B cell (primary cell): ENCODE measurements at regions of chr22 and their contacts with region 1.

Region 1: GRCh38 chr22:40487663-40488249 is 117.4 kb downstream of the SGSM3 start:
- DNase-seq: peak; percentile 64
- ATAC-seq: no peak
- H3K4me3 ChIP-seq: no peak overlapping the region
- H3K4me3 Mint-ChIP-seq: no peak overlapping the region
- H3K27ac ChIP-seq: peak overlapping the region in 1 of 2 donors; percentile 25
- H3K27ac Mint-ChIP-seq: peak overlapping the region; percentile 5
- H3K4me1 ChIP-seq: peaks cover 25 to 30% of the 10 kb centered on the region in 2 donors
- H3K4me1 Mint-ChIP-seq: peaks cover 26% of the 10 kb centered on the region
- H3K27me3 ChIP-seq: no peaks in the 10 kb centered on the region
- H3K27me3 Mint-ChIP-seq: no peaks in the 10 kb centered on the region
- CTCF ChIP-seq: peak; percentile 83

Region 2: GRCh38 chr22:40368016-40368415 is 119.7 kb before region 1 on chr22:
- CTCF ChIA-PET with region 1: interaction called, 3 read pairs
- POLR2A ChIA-PET with region 1: no interaction called
- intact Hi-C with region 1: loop called (anchors 2 kb)
- DNase-seq: no peak
- ATAC-seq: no peak
- H3K4me3 ChIP-seq: no peak overlapping the region
- H3K4me3 Mint-ChIP-seq: no peak overlapping the region
- H3K27ac ChIP-seq: no peak overlapping the region
- H3K27ac Mint-ChIP-seq: peak overlapping the region; percentile 26
- H3K4me1 ChIP-seq: peaks cover 6 to 9% of the 10 kb centered on the region in 2 donors
- H3K4me1 Mint-ChIP-seq: peaks cover 18% of the 10 kb centered on the region
- H3K27me3 ChIP-seq: no peaks in the 10 kb centered on the region
- H3K27me3 Mint-ChIP-seq: no peaks in the 10 kb centered on the region
- CTCF ChIP-seq: no peak

Region 3: GRCh38 chr22:40418366-40419201 is 69.2 kb before region 1 on chr22:
- CTCF ChIA-PET with region 1: interaction called, 11 read pairs
- POLR2A ChIA-PET with region 1: no interaction called
- intact Hi-C with region 1: no loop called
- DNase-seq: peak; percentile 62
- ATAC-seq: peak; percentile 20
- H3K4me3 ChIP-seq: no peak overlapping the region
- H3K4me3 Mint-ChIP-seq: no peak overlapping the region
- H3K27ac ChIP-seq: peak overlapping the region; percentile 16 to 17
- H3K27ac Mint-ChIP-seq: peak overlapping the region; percentile 64
- H3K4me1 ChIP-seq: peaks cover 54 to 64% of the 10 kb centered on the region in 2 donors
- H3K4me1 Mint-ChIP-seq: peaks cover 60% of the 10 kb centered on the region
- H3K27me3 ChIP-seq: no peaks in the 10 kb centered on the region
- H3K27me3 Mint-ChIP-seq: no peaks in the 10 kb centered on the region
- CTCF ChIP-seq: no peak

Region 4: DNA sequence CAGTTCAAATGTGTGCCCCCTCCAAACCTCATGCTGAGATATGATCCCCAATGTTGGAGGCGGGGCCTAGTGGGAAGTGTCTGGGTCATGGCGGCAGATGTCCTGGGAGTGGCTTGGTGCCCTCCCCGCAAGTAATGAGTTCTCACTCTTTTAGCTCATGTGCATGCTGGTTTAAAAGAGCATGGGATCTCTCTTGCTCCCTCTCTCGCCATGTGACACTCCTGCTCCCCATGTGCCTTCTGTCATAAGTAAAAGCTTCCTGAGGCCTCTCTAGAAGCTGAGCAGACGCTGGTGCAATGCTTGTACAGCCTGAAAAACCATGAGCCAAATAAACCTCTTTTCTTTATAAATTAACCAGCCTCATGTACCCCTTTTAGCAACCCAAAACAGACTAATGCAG is 18.6 kb before region 1 on chr22:
- CTCF ChIA-PET with region 1: interaction called, 31 read pairs
- POLR2A ChIA-PET with region 1: no interaction called
- intact Hi-C with region 1: no loop called
- DNase-seq: no peak
- ATAC-seq: no peak
- H3K4me3 ChIP-seq: no peak overlapping the region
- H3K4me3 Mint-ChIP-seq: no peak overlapping the region
- H3K27ac ChIP-seq: no peak overlapping the region
- H3K27ac Mint-ChIP-seq: no peak overlapping the region
- H3K4me1 ChIP-seq: peaks cover under 1 to 2% of the 10 kb centered on the region in 2 donors
- H3K4me1 Mint-ChIP-seq: peaks cover 6% of the 10 kb centered on the region
- H3K27me3 ChIP-seq: no peaks in the 10 kb centered on the region
- H3K27me3 Mint-ChIP-seq: no peaks in the 10 kb centered on the region
- CTCF ChIP-seq: no peak

Region 5: GRCh38 chr22:40547729-40548172 is 60.0 kb after region 1 on chr22:
- CTCF ChIA-PET with region 1: no interaction called
- POLR2A ChIA-PET with region 1: no interaction called
- intact Hi-C with region 1: no loop called
- DNase-seq: no peak
- ATAC-seq: no peak
- H3K4me3 ChIP-seq: no peak overlapping the region
- H3K4me3 Mint-ChIP-seq: no peak overlapping the region
- H3K27ac ChIP-seq: no peak overlapping the region
- H3K27ac Mint-ChIP-seq: no peak overlapping the region
- H3K4me1 ChIP-seq: no peaks in the 10 kb centered on the region
- H3K4me1 Mint-ChIP-seq: peaks cover 4% of the 10 kb centered on the region
- H3K27me3 ChIP-seq: no peaks in the 10 kb centered on the region
- H3K27me3 Mint-ChIP-seq: no peaks in the 10 kb centered on the region
- CTCF ChIP-seq: no peak

Region 6: GRCh38 chr22:40636380-40637182 is 148.8 kb after region 1 on chr22 and contains the start of gene MRTFA:
- CTCF ChIA-PET with region 1: interaction called, 6 read pairs
- POLR2A ChIA-PET with region 1: no interaction called
- intact Hi-C with region 1: loop called (anchors 1 kb)
- DNase-seq: peak; percentile 99
- ATAC-seq: peak; percentile 90
- H3K4me3 ChIP-seq: peak within 1 kb of the TSS; percentile 81 to 99 (median 96)
- H3K4me3 Mint-ChIP-seq: peak within 1 kb of the TSS; percentile 98
- H3K27ac ChIP-seq: peak within 1 kb of the TSS; percentile 84 to 92
- H3K27ac Mint-ChIP-seq: peak within 1 kb of the TSS; percentile 97
- H3K4me1 ChIP-seq: peaks cover 24 to 30% of the 10 kb centered on the region in 2 donors
- H3K4me1 Mint-ChIP-seq: peaks cover 39% of the 10 kb centered on the region
- H3K27me3 ChIP-seq: no peaks in the 10 kb centered on the region
- H3K27me3 Mint-ChIP-seq: no peaks in the 10 kb centered on the region
- CTCF ChIP-seq: no peak
- total RNA-seq, gene MRTFA: 82.6 and 87.6 TPM in 2 replicates